ENCODE measurements at regions of chr17 and their contacts with region 1.

Region 1: DNA sequence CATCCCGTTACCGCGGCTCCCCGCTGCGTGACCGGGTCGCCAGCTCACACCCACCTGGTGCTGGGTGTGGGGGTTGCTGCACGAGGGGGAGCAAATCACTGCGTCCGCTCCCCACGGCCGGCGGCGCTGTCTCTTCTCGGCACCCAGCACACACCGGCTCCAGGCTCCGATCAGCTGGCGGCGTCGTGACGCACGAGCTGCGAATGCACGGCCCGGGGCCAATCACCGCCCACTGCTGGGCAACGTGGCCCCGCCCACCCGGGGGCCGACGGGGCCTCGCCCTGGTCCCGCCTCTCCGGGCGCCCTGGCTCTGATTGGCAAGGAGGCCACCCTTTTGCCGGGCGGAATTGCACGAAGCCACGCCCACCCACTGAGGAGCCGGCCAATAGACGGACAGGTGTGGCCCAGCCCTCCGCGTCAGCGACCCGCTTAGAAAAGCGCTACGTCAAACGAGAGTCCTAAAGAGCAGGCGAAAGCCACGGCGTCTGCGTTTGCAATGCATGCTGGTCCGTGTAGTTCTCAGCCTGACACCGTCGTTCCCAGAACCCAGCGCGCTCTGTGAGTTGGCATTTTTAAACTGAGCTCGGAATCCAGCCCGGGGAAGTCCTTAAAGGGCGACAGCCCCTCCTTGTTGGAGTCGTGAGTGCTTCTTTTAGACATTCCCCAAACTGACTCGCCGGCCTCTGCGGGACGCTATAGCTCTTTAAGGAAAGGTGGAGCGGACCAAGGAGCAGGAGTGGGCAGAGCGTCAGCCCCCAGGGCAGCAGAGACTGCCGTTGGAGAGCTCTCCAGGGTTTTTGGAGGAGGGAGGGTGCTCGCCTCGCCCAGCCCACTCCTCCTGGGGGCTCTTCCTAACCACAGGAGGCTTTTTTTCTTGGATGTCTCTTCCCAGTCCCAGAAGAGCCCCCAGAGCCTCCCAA is 6.2 kb upstream of the TLCD2 start:
- DNase-seq: peak; percentile 100
- ATAC-seq: peak; percentile 89
- H3K4me3 Mint-ChIP-seq: peak overlapping the region; percentile 86
- H3K27ac Mint-ChIP-seq: peak overlapping the region; percentile 97
- H3K4me1 Mint-ChIP-seq: peaks cover 23% of the 10 kb centered on the region
- H3K27me3 Mint-ChIP-seq: peaks cover 4% of the 10 kb centered on the region

Region 2: GRCh38 chr17:1399679-1400512 is 316.4 kb before region 1 on chr17 and contains the start of gene YWHAE:
- CTCF ChIA-PET with region 1: no interaction called
- POLR2A ChIA-PET with region 1: no interaction called
- intact Hi-C with region 1: loop called in 1 of 2 experiments (anchors 1 kb)
- DNase-seq: peak; percentile 99
- ATAC-seq: peak; percentile 95
- H3K4me3 Mint-ChIP-seq: peak within 1 kb of the TSS; percentile 100
- H3K27ac Mint-ChIP-seq: peak within 1 kb of the TSS; percentile 100
- H3K4me1 Mint-ChIP-seq: peaks cover 27% of the 10 kb centered on the region
- H3K27me3 Mint-ChIP-seq: no peaks in the 10 kb centered on the region
- total RNA-seq, gene YWHAE: 520 to 553 TPM

Region 3: GRCh38 chr17:1561400-1562175 is 154.7 kb before region 1 on chr17:
- CTCF ChIA-PET with region 1: interaction called, 3 read pairs
- POLR2A ChIA-PET with region 1: no interaction called
- intact Hi-C with region 1: loop called (anchors 1 to 10 kb)
- DNase-seq: peak; percentile 64
- ATAC-seq: peak; percentile 35
- H3K4me3 Mint-ChIP-seq: peak overlapping the region; percentile 81
- H3K27ac Mint-ChIP-seq: no peak overlapping the region
- H3K4me1 Mint-ChIP-seq: peaks cover 27% of the 10 kb centered on the region
- H3K27me3 Mint-ChIP-seq: no peaks in the 10 kb centered on the region

Region 4: DNA sequence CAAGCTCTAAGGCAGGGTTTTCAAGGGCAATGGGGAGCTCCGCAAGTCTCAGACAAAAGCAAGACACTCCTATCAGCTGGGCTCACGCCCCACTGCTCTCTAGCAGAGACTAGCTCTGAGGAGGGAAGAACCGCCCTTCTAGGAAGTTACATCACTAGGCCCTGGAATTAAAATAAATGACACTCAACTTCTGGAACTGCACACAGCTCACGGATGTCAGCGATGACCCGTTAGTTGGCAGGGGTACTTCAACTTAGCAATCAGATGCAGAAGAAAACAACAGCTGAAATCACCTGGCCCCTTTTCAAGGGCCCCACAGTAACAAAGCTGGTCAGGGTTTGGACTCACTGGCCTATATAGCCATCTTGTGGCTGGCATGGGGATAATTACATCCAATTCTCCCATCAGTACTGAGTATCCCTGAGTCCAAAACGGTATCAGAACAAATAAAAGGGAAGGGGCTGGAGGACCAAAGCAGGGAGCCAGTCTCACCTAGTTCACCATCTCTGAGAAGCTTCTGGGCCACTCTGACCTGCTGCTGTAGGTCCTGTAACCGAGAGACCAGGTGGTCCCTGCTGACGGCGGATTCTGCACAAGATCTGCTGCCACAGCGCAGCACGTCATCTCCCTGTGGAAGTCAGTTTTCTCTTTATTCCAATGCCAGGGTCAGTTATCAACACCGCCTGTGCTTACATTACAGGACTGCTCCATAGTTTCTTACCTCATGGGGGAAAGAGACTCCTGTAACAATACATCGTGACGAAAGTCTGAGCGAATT is 67.7 kb after region 1 on chr17:
- CTCF ChIA-PET with region 1: interaction called, 8 read pairs
- POLR2A ChIA-PET with region 1: no interaction called
- intact Hi-C with region 1: loop called in 1 of 2 experiments (anchors 2 kb)
- DNase-seq: no peak
- ATAC-seq: no peak
- H3K4me3 Mint-ChIP-seq: no peak overlapping the region
- H3K27ac Mint-ChIP-seq: peak overlapping the region; percentile 55
- H3K4me1 Mint-ChIP-seq: peaks cover 10% of the 10 kb centered on the region
- H3K27me3 Mint-ChIP-seq: no peaks in the 10 kb centered on the region

Region 5: DNA sequence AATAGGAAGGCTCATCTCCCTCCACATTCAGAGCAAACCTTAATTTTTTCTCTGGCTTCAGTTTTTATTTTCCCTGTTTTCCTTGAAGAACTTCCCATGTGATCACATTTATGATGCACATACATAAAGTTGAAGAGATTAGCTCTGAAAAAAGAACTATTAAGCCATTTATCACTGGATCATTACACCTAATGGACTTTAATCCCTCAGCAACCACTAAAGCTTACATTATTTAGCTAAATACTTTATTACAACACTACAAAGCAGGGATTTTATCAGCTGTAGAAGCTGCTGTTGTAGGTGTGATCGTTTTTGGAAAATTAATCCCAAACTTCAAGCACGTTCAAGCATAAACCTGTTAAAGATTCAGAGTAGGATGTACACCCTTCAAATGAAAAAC is 92.3 kb after region 1 on chr17:
- CTCF ChIA-PET with region 1: no interaction called
- POLR2A ChIA-PET with region 1: no interaction called
- intact Hi-C with region 1: no loop called
- DNase-seq: no peak
- ATAC-seq: no peak
- H3K4me3 Mint-ChIP-seq: no peak overlapping the region
- H3K27ac Mint-ChIP-seq: no peak overlapping the region
- H3K4me1 Mint-ChIP-seq: no peaks in the 10 kb centered on the region
- H3K27me3 Mint-ChIP-seq: no peaks in the 10 kb centered on the region

Region 6: GRCh38 chr17:2041561-2042366 is 325.4 kb after region 1 on chr17 and contains the start of gene OVCA2:
- CTCF ChIA-PET with region 1: no interaction called
- POLR2A ChIA-PET with region 1: no interaction called
- intact Hi-C with region 1: loop called (anchors 1 to 5 kb)
- DNase-seq: peak; percentile 99
- ATAC-seq: peak; percentile 92
- H3K4me3 Mint-ChIP-seq: peak within 1 kb of the TSS; percentile 95
- H3K27ac Mint-ChIP-seq: peak within 1 kb of the TSS; percentile 95
- H3K4me1 Mint-ChIP-seq: peaks cover 23% of the 10 kb centered on the region
- H3K27me3 Mint-ChIP-seq: no peaks in the 10 kb centered on the region
- total RNA-seq, gene OVCA2: 31.4 to 38.6 TPM

Region 7: DNA sequence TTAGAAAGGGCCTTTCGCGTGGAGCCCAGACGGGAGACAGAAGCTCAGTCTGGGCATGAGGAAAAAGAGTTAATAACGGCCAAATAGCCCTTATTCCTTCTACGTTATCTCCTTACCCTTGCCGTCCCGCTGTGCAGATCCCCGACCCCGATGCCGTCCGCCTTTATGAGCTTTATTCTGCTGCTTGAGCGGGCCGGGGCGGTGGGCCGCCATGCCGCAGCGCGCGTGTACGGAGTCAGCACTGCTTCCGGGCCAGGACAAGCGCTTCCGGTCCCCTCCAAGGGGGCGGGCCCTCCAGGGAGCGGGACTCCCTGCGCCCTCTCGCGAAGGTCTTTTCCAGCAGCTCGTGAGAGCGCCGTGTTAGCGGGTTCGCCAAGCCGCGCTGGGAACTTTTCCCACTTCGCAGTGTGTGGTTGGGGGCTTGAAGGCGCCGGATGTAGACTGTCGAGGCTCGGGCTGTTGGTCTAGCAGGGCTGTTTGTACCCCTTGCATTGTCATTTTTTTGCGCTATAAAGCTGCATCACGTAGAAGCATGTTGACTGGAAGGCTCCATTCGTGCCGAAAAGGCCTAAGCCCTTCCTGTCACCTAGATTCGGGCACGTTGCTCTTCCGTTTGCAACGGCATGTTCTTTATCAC is 620.0 kb after region 1 on chr17 and contains the start of gene TSR1:
- CTCF ChIA-PET with region 1: no interaction called
- POLR2A ChIA-PET with region 1: no interaction called
- intact Hi-C with region 1: loop called in 1 of 2 experiments (anchors 2 kb)
- DNase-seq: peak; percentile 94
- ATAC-seq: peak; percentile 93
- H3K4me3 Mint-ChIP-seq: no peak within 1 kb of the TSS
- H3K27ac Mint-ChIP-seq: peak within 1 kb of the TSS; percentile 99
- H3K4me1 Mint-ChIP-seq: peaks cover 14% of the 10 kb centered on the region
- H3K27me3 Mint-ChIP-seq: no peaks in the 10 kb centered on the region
- total RNA-seq, gene TSR1: 59.3 to 77.0 TPM

Measured in activated CD4-positive, alpha-beta T cell treated with anti-CD3 and anti-CD28 coated beads for 36 hours (primary cell).